Endothelial cell of umbilical vein (primary cell): ENCODE measurements at regions of chr22 and their contacts with region 1.

Region 1: DNA sequence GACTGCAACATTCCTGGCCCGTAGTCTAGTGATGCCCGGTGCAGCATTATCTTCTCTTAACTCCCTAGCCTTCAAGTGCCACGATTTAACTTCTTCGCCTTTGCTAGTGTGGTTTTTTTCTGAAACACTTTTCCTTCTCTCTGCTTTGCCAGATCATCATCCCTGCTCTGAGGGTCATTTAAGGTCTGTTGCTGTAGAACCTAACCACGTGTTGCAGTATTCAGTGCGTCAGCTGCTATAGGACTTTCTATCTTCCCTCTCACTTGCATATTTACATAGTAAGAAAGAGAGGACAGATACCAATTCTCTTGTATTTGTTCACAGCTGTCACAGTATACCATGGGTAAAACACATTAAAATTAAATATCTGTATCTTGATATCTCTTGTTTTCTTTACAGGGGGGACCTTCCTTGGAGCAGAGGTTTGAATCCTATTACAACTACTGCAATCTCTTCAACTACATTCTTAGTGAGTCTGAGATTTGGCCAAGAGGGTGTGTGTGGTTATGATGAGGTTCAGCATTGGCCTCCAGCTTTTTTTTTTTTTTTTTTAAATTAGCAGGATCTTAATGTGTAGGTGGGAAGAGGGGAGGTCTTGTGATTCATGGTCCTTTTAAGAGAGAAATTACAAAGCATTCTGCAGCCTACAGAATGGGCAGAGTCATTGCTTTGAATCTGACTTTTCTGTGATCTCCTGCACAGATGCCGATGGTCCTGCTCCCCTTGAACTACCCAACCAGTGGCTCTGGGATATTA is 13.5 kb downstream of the EIF3L start:
- DNase-seq: no peak
- H3K4me3 ChIP-seq: no peak overlapping the region
- H3K27ac ChIP-seq: no peak overlapping the region
- H3K4me1 ChIP-seq: peaks cover 18% of the 10 kb centered on the region
- H3K27me3 ChIP-seq: no peaks in the 10 kb centered on the region
- CTCF ChIP-seq: no peak
- POLR2A ChIP-seq: no peak

Region 2: DNA sequence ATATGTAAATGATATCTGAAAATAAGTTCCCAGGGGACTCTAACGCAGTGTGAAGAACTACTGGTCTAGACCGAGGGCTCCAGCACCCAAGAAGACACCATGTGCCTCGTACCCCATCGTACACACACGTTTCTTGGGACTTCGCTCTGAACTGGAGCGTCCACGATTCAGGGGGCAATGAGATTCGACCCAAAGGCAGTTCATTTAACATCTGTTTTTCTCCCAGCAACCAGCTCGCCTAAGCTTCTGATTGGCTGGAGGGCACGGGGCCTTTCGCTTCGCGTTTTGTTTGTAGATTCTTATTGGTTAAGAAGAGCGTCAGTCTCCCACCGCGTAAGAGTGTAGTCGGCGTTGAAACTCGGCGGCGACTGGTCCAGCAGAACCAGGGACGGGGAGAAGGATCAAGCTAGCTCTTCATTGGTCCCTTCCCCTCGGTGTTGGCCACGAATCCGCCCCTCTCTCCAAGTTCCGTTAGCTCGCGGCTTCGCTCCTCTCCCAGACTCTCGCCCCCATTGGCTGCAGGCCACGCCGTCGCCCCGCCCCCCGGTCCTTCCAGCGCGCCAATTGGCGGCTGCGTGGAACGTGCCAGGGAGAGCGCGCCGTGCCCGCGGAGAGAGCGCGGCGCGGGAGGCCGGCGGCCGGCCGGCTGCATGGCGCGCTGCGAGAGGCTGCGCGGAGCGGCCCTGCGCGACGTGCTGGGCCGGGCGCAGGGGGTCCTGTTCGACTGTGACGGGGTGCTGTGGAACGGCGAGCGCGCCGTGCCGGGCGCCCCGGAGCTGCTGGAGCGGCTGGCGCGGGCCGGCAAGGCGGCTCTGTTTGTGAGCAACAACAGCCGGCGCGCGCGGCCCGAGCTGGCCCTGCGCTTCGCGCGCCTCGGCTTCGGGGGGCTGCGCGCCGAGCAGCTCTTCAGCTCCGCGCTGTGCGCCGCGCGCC is 204.3 kb before region 1 on chr22 and contains the start of gene PDXP:
- CTCF ChIA-PET with region 1: interaction called, 11 read pairs
- POLR2A ChIA-PET with region 1: no interaction called
- dilution Hi-C with region 1: no loop called
- intact Hi-C with region 1: no loop called
- DNase-seq: peak; percentile 100
- H3K4me3 ChIP-seq: peak within 1 kb of the TSS; percentile 18 to 85 (median 54)
- H3K27ac ChIP-seq: peak within 1 kb of the TSS; percentile 7
- H3K4me1 ChIP-seq: peaks cover 17% of the 10 kb centered on the region
- H3K27me3 ChIP-seq: no peaks in the 10 kb centered on the region
- CTCF ChIP-seq: no peak
- POLR2A ChIP-seq: peak; percentile 73
- total RNA-seq, gene PDXP: 14.8 and 18.0 TPM in 2 replicates

Region 3: DNA sequence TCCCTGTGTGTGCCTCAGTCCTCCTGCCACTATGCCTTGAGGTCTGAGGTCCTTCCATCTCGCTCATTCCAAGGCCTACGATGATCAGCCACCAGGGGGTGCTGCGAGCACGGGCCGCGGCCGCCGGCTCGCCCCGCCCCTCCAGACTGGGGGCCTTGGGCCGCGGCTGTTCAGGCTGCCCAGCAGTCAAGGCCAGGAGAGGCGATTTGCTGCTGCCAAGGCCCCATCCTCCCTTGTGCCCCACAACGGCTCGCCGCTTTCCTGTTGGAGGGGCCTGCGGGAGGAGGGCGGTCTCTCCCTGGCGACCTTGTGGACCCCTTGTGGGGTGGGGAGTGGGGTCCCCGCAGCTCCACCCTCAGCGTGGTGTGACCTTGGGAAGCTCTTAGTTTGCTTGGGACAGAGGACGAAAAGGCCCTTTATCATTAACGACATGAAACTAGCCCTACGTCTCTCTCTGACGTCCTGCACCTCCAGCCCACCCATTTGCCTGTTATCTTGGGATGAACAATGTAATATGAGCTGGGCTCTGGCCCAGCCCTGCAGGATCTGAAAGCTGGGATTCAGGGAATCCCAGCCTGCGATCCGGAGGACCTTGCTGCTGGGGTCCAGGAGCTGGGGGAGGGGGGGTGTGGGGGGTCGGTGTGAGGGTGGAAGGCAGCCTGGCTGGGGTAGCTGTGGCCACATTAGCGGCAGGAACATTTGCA is 44.9 kb before region 1 on chr22:
- CTCF ChIA-PET with region 1: interaction called, 223 read pairs
- POLR2A ChIA-PET with region 1: interaction called, 8 read pairs
- dilution Hi-C with region 1: no loop called
- intact Hi-C with region 1: loop called (anchors 1 kb)
- DNase-seq: peak; percentile 86
- H3K4me3 ChIP-seq: peak overlapping the region in 1 of 3 experiments; percentile 5
- H3K27ac ChIP-seq: no peak overlapping the region
- H3K4me1 ChIP-seq: peaks cover 9% of the 10 kb centered on the region
- H3K27me3 ChIP-seq: peaks cover 2 to 3% of the 10 kb centered on the region in 2 experiments
- CTCF ChIP-seq: peak; percentile 95 to 98
- POLR2A ChIP-seq: no peak

Region 4: GRCh38 chr22:37832022-37832857 is 30.5 kb before region 1 on chr22:
- CTCF ChIA-PET with region 1: interaction called, 17 read pairs
- POLR2A ChIA-PET with region 1: no interaction called
- dilution Hi-C with region 1: no loop called
- intact Hi-C with region 1: no loop called
- DNase-seq: no peak
- H3K4me3 ChIP-seq: no peak overlapping the region
- H3K27ac ChIP-seq: no peak overlapping the region
- H3K4me1 ChIP-seq: no peaks in the 10 kb centered on the region
- H3K27me3 ChIP-seq: no peaks in the 10 kb centered on the region
- CTCF ChIP-seq: no peak
- POLR2A ChIP-seq: no peak

Region 5: GRCh38 chr22:37849089-37849751 is 13.5 kb before region 1 on chr22 and contains the start of gene EIF3L:
- CTCF ChIA-PET with region 1: interaction called, 35 read pairs
- POLR2A ChIA-PET with region 1: interaction called, 3 read pairs
- dilution Hi-C with region 1: no loop called
- intact Hi-C with region 1: loop called (anchors 1 kb)
- DNase-seq: peak; percentile 94
- H3K4me3 ChIP-seq: peak within 1 kb of the TSS; percentile 86 to 97 (median 95)
- H3K27ac ChIP-seq: peak within 1 kb of the TSS; percentile 79
- H3K4me1 ChIP-seq: peaks cover 17% of the 10 kb centered on the region
- H3K27me3 ChIP-seq: no peaks in the 10 kb centered on the region
- CTCF ChIP-seq: no peak
- POLR2A ChIP-seq: peak; percentile 94
- total RNA-seq, gene EIF3L: 442 and 479 TPM in 2 replicates